Heart left ventricle (tissue), 16 donors: ENCODE measurements at regions of chr6 and their contacts with region 1.

Region 1: GRCh38 chr6:139364302-139364981 is 10.0 kb downstream of the CITED2 start:
- DNase-seq: no peak
- ATAC-seq: peak; percentile 6 to 51 (median 40)
- H3K4me3 ChIP-seq: no peak overlapping the region
- H3K27ac ChIP-seq: no peak overlapping the region
- H3K4me1 ChIP-seq: peaks cover 0 to 31% (median 15%) of the 10 kb centered on the region in 12 donors
- H3K27me3 ChIP-seq: no peaks in the 10 kb centered on the region
- CTCF ChIP-seq: peak; percentile 64 to 92 (median 74)
- POLR2A ChIP-seq: no peak

Region 2: GRCh38 chr6:138824482-138825144 is 539.8 kb before region 1 on chr6:
- intact Hi-C with region 1: loop called in 9 of 10 experiments (anchors 5 to 10 kb)
- DNase-seq: no peak
- ATAC-seq: peak in 3 of 4 donors; percentile 13 to 51 (median 16)
- H3K4me3 ChIP-seq: no peak overlapping the region
- H3K27ac ChIP-seq: no peak overlapping the region
- H3K4me1 ChIP-seq: peaks cover 0 to 4% (median 0%) of the 10 kb centered on the region in 12 donors
- H3K27me3 ChIP-seq: no peaks in the 10 kb centered on the region
- CTCF ChIP-seq: no peak
- POLR2A ChIP-seq: no peak

Region 3: DNA sequence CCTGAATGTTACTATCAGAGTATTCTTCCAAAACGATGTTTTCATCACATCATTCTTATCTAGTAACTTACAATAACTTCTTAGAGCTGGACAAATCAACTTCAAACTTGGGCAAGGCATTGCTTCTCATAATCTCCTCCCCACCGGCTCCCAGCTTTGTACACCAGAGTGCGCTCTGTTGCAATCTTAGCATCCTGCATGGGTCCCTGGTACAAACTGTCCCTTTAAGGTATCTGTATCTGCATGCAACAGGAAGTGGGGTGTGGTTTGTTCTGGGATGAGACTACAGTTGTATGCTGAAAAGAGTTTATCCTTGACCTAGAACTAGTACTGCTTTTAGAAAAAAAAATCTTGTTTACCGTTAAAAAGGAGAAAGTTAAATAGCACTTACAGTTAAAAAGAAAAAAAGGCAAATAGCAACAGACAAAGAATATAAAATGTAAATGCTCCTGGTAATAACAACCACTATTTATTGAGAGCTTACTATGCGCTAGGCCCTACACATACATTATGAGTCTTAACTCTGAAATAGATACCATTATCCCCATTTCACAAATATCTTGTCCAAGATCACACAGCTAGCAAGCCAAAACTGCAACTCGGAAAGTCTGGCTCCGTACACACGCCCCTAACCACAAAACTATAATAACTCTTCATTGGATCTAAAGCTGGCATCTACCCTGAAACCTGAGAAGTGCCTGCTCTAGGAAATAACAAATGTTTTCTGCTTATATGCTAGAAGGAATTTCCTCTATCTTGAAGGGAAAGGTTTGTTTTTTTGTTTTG is 239.4 kb before region 1 on chr6:
- intact Hi-C with region 1: loop called (anchors 1 to 5 kb)
- DNase-seq: peak; percentile 60 to 66 (median 60)
- ATAC-seq: peak; percentile 96 to 99 (median 98)
- H3K4me3 ChIP-seq: no peak overlapping the region
- H3K27ac ChIP-seq: peak overlapping the region in 5 of 12 donors; percentile 19 to 73 (median 35)
- H3K4me1 ChIP-seq: peaks cover 0 to 23% (median 4%) of the 10 kb centered on the region in 12 donors
- H3K27me3 ChIP-seq: no peaks in the 10 kb centered on the region
- CTCF ChIP-seq: peak; percentile 32 to 76 (median 59)
- POLR2A ChIP-seq: no peak

Region 4: DNA sequence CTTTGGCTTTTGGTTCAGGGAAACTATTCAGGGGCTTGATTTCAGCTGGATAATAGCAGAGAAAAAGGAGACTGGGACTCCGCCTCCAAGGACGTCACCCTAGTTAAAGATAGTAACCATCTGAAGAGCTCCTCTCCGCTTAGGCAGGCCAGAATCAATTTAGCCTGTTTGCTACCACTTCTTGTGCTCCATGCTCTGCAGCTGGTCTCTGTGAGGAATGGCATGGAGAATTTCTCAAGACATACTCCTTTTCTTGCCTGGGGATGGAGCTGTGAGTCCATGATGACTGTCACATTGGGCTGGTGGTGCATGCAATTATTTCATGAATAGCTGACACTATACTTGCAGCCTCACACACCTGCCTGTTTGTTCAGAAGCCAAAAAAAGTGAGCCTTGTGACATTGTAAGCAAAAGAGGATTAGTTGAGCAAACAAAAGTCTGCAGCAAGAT is 134.0 kb before region 1 on chr6:
- intact Hi-C with region 1: loop called in 3 of 10 experiments (anchors 5 kb)
- DNase-seq: no peak
- ATAC-seq: peak; percentile 47 to 77 (median 52)
- H3K4me3 ChIP-seq: no peak overlapping the region
- H3K27ac ChIP-seq: no peak overlapping the region
- H3K4me1 ChIP-seq: peaks cover 0 to 13% (median 0%) of the 10 kb centered on the region in 12 donors
- H3K27me3 ChIP-seq: no peaks in the 10 kb centered on the region
- CTCF ChIP-seq: peak in 3 of 12 donors; percentile 9 to 21 (median 10)
- POLR2A ChIP-seq: no peak